Activated B cell treated with CpG ODN at 0.5 μM for 24 hours (primary cell): ENCODE measurements at regions of chr7 and their contacts with region 1.

Region 1: DNA sequence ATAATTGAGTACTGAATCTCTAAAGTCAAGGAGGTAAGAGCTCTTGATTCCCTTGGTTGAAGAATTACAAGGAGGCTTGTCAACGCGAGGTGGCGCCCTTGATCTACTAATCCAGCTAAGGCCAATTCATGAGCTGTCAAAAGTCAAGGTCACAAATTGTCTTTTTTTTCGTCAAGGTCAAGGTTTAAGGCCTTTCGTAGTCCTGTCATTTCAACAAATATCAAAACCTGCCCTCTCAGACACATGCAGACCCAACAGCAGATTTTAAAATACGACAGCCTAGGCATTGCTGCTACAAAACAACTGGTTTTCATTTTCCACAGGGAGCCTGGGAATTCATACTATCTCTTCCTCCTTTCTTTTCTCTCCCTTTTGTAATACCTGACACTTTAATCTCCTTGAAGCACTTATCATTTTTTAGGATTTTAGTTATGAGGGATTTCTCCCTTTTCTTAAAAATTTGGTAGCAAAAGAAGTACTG is 3.6 kb downstream of the HOXA13 start:
- DNase-seq: no peak
- ATAC-seq: no peak
- H3K4me3 Mint-ChIP-seq: no peak overlapping the region
- H3K27ac Mint-ChIP-seq: no peak overlapping the region
- H3K4me1 Mint-ChIP-seq: peaks cover 30% of the 10 kb centered on the region
- H3K27me3 Mint-ChIP-seq: peaks cover 65% of the 10 kb centered on the region
- CTCF ChIP-seq: no peak

Region 2: GRCh38 chr7:26525398-26526264 is 670.7 kb before region 1 on chr7:
- CTCF ChIA-PET with region 1: no interaction called
- POLR2A ChIA-PET with region 1: no interaction called
- intact Hi-C with region 1: no loop called
- DNase-seq: no peak
- ATAC-seq: no peak
- H3K4me3 Mint-ChIP-seq: no peak overlapping the region
- H3K27ac Mint-ChIP-seq: no peak overlapping the region
- H3K4me1 Mint-ChIP-seq: peaks cover 2% of the 10 kb centered on the region
- H3K27me3 Mint-ChIP-seq: peaks cover 9% of the 10 kb centered on the region
- CTCF ChIP-seq: no peak

Region 3: GRCh38 chr7:27179503-27180430 is 16.6 kb before region 1 on chr7:
- CTCF ChIA-PET with region 1: interaction called, 10 read pairs
- POLR2A ChIA-PET with region 1: no interaction called
- intact Hi-C with region 1: loop called (anchors 2 kb)
- DNase-seq: peak; percentile 29
- ATAC-seq: peak; percentile 47
- H3K4me3 Mint-ChIP-seq: peak overlapping the region; percentile 39
- H3K27ac Mint-ChIP-seq: no peak overlapping the region
- H3K4me1 Mint-ChIP-seq: peaks cover 15% of the 10 kb centered on the region
- H3K27me3 Mint-ChIP-seq: peaks cover 69% of the 10 kb centered on the region
- CTCF ChIP-seq: peak; percentile 24

Region 4: DNA sequence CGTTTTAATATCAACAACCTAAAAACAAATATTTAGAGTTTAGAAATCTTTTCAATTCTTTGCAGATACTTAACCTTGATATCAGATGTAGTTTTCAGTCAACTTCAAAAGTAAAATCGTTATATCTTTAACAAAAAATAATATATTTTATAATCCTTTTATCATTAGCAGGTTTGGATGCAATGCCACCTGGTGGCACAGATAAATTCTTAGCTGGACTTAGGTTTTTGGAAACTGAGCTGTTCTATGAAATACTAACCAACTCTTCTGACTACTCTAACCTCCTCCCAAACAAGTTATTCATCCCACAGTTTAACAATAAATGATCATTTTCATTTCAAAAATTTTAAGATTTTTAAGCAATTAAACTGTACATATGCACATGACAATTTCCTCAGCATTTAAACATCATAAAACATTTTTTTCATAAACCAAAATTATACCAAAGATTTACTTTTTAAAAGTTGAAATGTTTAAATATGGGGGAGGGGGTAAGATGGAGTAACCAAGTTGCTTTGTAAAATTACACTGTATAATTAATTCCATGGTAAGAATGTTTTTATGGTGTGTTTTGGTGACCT is 409.5 kb after region 1 on chr7:
- CTCF ChIA-PET with region 1: interaction called, 19 read pairs
- POLR2A ChIA-PET with region 1: no interaction called
- intact Hi-C with region 1: loop called (anchors 1 kb)
- DNase-seq: no peak
- ATAC-seq: no peak
- H3K4me3 Mint-ChIP-seq: no peak overlapping the region
- H3K27ac Mint-ChIP-seq: no peak overlapping the region
- H3K4me1 Mint-ChIP-seq: no peaks in the 10 kb centered on the region
- H3K27me3 Mint-ChIP-seq: no peaks in the 10 kb centered on the region
- CTCF ChIP-seq: no peak

Region 5: DNA sequence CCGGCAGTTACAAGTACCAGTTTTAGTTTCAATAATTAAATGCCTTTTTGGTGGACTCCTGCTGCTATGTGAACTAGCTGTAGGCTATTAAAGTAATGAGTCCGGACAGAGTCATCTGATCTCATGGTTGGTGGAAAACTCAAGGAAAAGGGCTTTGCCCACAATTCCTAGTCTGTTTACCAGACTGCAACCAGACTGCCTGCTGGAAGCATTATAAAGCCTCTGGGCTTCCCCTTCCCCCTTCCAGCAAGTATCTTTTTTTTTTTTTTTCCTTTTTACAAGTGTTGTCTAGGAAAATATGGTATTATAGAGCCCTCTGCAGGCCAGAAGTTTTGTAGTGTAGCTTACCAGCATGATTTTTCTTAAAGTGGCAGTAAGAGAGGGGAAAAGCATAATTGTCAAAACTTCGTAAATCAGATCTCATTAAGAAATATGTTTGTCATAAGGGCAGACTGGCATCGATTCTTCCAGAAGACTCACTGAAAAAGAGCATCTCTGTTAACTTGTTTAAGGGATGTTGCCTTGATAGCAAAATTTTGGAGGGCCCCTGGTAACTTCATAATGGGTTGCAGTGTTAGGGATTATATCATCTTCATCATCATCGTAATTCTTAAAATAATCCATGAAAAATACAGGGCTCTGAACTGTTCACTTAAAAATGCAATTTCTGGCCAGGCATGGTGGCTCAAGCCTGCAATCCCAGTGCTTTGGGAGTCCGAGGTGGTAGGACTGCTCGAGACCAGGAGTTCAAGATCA is 724.9 kb after region 1 on chr7:
- CTCF ChIA-PET with region 1: interaction called, 22 read pairs
- POLR2A ChIA-PET with region 1: interaction called, 4 read pairs
- intact Hi-C with region 1: loop called (anchors 1 kb)
- DNase-seq: no peak
- ATAC-seq: peak; percentile 42
- H3K4me3 Mint-ChIP-seq: no peak overlapping the region
- H3K27ac Mint-ChIP-seq: no peak overlapping the region
- H3K4me1 Mint-ChIP-seq: peaks cover 72% of the 10 kb centered on the region
- H3K27me3 Mint-ChIP-seq: no peaks in the 10 kb centered on the region
- CTCF ChIP-seq: no peak

Region 6: DNA sequence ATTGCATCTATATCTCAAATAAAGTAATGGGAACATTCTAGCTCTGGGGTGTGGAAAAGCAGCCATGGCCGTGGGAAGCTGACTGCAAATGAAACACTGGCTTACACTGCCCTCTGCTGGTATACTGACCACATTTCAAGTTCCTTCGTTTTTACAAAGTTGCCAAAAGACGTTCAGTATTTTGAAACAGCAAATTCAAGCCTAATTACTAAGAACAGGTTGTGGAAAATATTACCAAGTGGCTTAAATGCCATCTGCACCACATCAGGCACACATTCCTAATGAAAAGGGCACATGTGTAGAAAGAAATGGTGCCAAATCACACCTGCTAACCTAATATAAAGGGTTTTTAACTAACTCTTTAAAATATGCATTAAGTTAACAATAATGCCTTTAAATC is 900.4 kb after region 1 on chr7:
- CTCF ChIA-PET with region 1: interaction called, 17 read pairs
- POLR2A ChIA-PET with region 1: no interaction called
- intact Hi-C with region 1: loop called (anchors 1 kb)
- DNase-seq: no peak
- ATAC-seq: no peak
- H3K4me3 Mint-ChIP-seq: no peak overlapping the region
- H3K27ac Mint-ChIP-seq: no peak overlapping the region
- H3K4me1 Mint-ChIP-seq: peaks cover 40% of the 10 kb centered on the region
- H3K27me3 Mint-ChIP-seq: no peaks in the 10 kb centered on the region
- CTCF ChIP-seq: peak; percentile 50

Region 7: GRCh38 chr7:28626624-28627262 is 1430.4 kb after region 1 on chr7:
- CTCF ChIA-PET with region 1: interaction called, 3 read pairs
- POLR2A ChIA-PET with region 1: no interaction called
- intact Hi-C with region 1: loop called (anchors 2 kb)
- DNase-seq: no peak
- ATAC-seq: peak; percentile 60
- H3K4me3 Mint-ChIP-seq: no peak overlapping the region
- H3K27ac Mint-ChIP-seq: no peak overlapping the region
- H3K4me1 Mint-ChIP-seq: no peaks in the 10 kb centered on the region
- H3K27me3 Mint-ChIP-seq: peaks cover 13% of the 10 kb centered on the region
- CTCF ChIP-seq: no peak

Region 8: DNA sequence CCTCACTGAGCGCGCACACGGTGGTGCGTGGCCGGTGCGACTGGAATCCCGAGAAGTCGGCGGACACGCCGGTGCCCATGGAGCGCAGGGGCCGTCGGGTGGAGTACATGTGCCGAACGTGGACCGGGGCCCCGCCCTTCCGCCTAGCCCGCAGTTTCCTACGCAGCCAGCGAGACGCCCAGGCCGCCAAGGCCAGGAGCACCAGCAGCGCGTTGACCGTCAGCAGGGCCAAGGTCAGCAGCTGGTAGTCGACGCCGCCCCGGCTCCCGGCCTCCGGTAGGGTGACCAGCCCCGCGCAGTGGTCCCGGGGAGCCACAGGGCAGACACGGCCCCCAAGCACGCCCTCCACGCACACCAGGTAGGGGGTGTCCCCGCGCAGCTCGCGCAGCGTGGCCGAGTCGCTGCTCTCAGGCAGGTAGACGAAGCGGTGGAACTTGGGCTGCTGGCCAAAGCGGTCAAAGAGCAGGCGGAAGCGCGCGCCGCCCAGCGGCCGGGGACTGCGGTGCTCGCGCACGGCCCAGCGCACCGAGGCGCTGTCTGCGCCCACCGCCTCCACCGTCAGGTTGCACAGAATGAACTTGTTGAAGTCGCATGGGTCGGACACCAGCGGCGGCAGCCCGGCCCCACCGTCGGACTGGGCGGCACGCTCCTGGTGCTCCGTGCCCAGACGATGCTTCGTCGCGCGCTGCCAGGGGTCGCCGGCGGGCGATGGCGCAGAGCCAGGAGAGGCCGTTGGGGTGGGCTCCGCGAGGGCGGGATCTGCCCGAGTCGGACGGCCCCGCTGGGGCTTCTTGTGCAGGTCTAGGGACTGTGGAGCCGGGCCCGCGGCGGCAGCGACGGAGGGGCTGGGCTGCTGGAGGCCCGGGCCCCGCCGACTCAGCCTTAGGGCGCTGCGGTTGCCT is 1759.6 kb after region 1 on chr7:
- CTCF ChIA-PET with region 1: no interaction called
- POLR2A ChIA-PET with region 1: no interaction called
- intact Hi-C with region 1: loop called (anchors 10 kb)
- DNase-seq: peak; percentile 20
- ATAC-seq: peak; percentile 34
- H3K4me3 Mint-ChIP-seq: peak overlapping the region; percentile 56
- H3K27ac Mint-ChIP-seq: no peak overlapping the region
- H3K4me1 Mint-ChIP-seq: peaks cover 14% of the 10 kb centered on the region
- H3K27me3 Mint-ChIP-seq: peaks cover 50% of the 10 kb centered on the region
- CTCF ChIP-seq: no peak